Activated naive CD4-positive, alpha-beta T cell treated with anti-CD3 and anti-CD28 coated beads for 36 hours (primary cell): ENCODE measurements at regions of chr9 and their contacts with region 1.

Region 1: GRCh38 chr9:71638627-71639026 is 129.7 kb downstream of the CEMIP2 start:
- DNase-seq: peak; percentile 6
- H3K4me3 Mint-ChIP-seq: no peak overlapping the region
- H3K27ac Mint-ChIP-seq: no peak overlapping the region
- H3K4me1 Mint-ChIP-seq: peaks cover 7% of the 10 kb centered on the region
- H3K27me3 Mint-ChIP-seq: no peaks in the 10 kb centered on the region

Region 2: GRCh38 chr9:71663931-71664459 is 25.4 kb after region 1 on chr9:
- CTCF ChIA-PET with region 1: no interaction called
- intact Hi-C with region 1: no loop called
- DNase-seq: no peak
- H3K4me3 Mint-ChIP-seq: no peak overlapping the region
- H3K27ac Mint-ChIP-seq: no peak overlapping the region
- H3K4me1 Mint-ChIP-seq: no peaks in the 10 kb centered on the region
- H3K27me3 Mint-ChIP-seq: peaks cover 2% of the 10 kb centered on the region

Region 3: GRCh38 chr9:71683598-71684235 is 45.1 kb after region 1 on chr9:
- CTCF ChIA-PET with region 1: no interaction called
- intact Hi-C with region 1: loop called (anchors 2 kb)
- DNase-seq: no peak
- H3K4me3 Mint-ChIP-seq: no peak overlapping the region
- H3K27ac Mint-ChIP-seq: no peak overlapping the region
- H3K4me1 Mint-ChIP-seq: peaks cover 27% of the 10 kb centered on the region
- H3K27me3 Mint-ChIP-seq: no peaks in the 10 kb centered on the region